ENCODE measurements at regions of chr1 and their contacts with region 1.

Region 1: DNA sequence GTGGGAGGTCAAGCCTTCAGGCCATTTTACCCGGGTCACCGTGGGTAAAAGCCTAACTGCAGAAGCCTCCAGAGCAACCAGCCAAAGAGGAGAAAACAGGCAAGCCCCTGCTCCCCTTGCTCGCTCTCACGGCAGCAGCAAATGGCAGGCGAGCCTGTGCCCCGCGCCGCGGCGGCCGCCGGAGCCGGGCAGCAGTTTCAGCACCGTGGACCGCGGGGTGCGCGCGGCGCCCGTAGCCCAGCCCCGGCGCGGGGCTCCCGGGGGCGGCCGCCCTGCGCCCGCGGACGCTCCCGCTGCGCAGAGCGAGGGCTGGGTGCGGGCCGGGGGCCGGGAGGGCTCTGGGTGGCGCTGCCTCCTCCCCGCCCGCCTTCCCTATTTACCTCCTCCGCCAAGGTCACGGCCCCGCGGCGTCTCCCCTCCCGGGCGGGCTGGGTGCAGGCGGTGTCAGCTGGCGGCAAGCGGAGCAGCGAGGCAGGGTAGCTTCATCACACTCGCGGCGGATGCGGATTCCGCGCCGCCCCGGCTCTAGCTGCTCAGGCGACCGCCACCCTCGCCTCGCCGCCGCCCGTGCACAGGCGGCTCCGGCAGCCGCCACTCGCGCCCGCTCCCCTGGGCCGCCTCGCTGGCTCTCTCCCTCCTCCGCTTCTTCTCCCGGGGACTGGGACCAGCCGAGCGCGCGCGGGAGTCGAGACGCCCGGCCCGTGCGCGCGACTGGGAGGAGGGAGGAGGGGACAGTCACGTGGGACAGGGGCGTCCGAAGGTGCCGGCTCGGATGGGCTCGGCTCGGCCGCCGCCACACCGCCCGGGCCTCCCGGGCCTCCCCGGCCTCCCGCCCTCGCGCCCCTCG is at the start of gene RGS7:
- DNase-seq: peak; percentile 18 to 61 (median 42)
- H3K4me3 ChIP-seq: peak within 1 kb of the TSS; percentile 38
- H3K27ac ChIP-seq: no peak within 1 kb of the TSS
- H3K4me1 ChIP-seq: no peaks in the 10 kb centered on the region
- H3K27me3 ChIP-seq: no peaks in the 10 kb centered on the region
- CTCF ChIP-seq: no peak
- EP300 ChIP-seq: no peak
- POLR2A ChIP-seq: no peak
- total RNA-seq, gene RGS7: 0.10 to 0.84 (median 0.37) TPM in 6 of 7 donors, not detected in the other

Region 2: DNA sequence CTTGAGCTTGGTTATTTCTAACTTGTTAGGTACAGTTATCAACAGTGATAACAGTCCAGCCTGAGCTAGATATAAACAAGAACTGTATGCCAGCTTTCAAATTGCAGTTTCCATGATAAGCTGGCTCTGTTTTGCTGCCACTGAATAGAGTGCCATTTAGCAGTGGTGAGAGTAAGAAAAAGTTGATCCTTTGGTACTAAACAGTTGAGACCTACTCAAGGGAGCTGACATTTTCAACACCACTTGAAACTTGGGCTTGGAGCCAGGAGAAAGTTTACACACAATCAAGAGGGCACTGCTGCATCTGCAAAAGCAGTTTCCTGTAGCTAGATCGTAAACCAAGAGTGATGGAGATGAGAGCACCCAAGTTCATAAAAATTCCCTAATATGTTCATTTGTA is 131.0 kb before region 1 on chr1:
- intact Hi-C with region 1: no loop called
- DNase-seq: no peak
- H3K4me3 ChIP-seq: no peak overlapping the region
- H3K27ac ChIP-seq: no peak overlapping the region
- H3K4me1 ChIP-seq: no peaks in the 10 kb centered on the region
- H3K27me3 ChIP-seq: no peaks in the 10 kb centered on the region
- CTCF ChIP-seq: no peak
- EP300 ChIP-seq: no peak
- POLR2A ChIP-seq: no peak

Region 3: GRCh38 chr1:241286486-241286885 is 70.3 kb before region 1 on chr1:
- intact Hi-C with region 1: loop called in 1 of 4 experiments (anchors 5 kb)
- DNase-seq: no peak
- H3K4me3 ChIP-seq: no peak overlapping the region
- H3K27ac ChIP-seq: no peak overlapping the region
- H3K4me1 ChIP-seq: no peaks in the 10 kb centered on the region
- H3K27me3 ChIP-seq: no peaks in the 10 kb centered on the region
- CTCF ChIP-seq: no peak
- EP300 ChIP-seq: no peak
- POLR2A ChIP-seq: no peak

Region 4: GRCh38 chr1:241513378-241513777 is 156.6 kb after region 1 on chr1:
- intact Hi-C with region 1: no loop called
- DNase-seq: no peak
- H3K4me3 ChIP-seq: no peak overlapping the region
- H3K27ac ChIP-seq: no peak overlapping the region
- H3K4me1 ChIP-seq: no peaks in the 10 kb centered on the region
- H3K27me3 ChIP-seq: no peaks in the 10 kb centered on the region
- CTCF ChIP-seq: no peak
- EP300 ChIP-seq: no peak
- POLR2A ChIP-seq: no peak